Aorta (tissue), 5 donors: ENCODE measurements at regions of chr7 and their contacts with region 1.

Region 1: GRCh38 chr7:159015454-159016410 is 128.9 kb downstream of the VIPR2 start:
- DNase-seq: peak; percentile 80 to 90
- ATAC-seq: peak; percentile 85
- H3K4me3 ChIP-seq: no peak overlapping the region
- H3K27ac ChIP-seq: peak overlapping the region; percentile 64 to 97
- H3K4me1 ChIP-seq: peaks cover 4 to 5% of the 10 kb centered on the region in 2 donors
- H3K27me3 ChIP-seq: no peaks in the 10 kb centered on the region

Region 2: GRCh38 chr7:158620839-158621441 is 394.8 kb before region 1 on chr7:
- intact Hi-C with region 1: no loop called
- DNase-seq: no peak
- ATAC-seq: no peak
- H3K4me3 ChIP-seq: no peak overlapping the region
- H3K27ac ChIP-seq: no peak overlapping the region
- H3K4me1 ChIP-seq: peaks cover 0 to 1% of the 10 kb centered on the region in 2 donors
- H3K27me3 ChIP-seq: no peaks in the 10 kb centered on the region

Region 3: DNA sequence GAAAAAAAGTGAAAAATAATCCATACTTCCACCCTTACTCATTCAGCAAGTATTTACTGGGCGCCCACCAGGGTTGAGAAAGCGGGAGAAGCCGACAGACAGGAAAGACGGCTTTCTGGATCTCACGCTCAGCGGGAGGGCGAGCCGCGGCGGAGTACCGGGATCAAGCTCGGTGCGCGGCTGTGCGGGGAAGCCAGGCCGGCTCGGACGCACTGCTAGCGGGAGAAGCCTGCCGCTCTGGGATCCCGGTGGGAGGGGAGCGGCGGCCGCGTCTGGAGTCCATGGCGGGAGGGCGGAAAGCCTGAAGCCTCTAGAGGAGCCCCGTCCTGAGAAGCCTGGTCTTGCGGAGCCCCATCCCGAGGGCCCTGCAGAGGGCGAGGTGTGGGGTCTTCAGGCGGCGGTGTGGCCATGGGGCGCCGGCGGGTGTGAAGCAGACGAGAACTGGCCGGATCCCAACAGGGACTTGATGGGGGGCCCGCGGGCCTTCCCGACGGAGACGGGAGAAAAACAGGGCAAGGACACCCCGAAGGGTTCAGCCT is 46.0 kb after region 1 on chr7:
- intact Hi-C with region 1: no loop called
- DNase-seq: peak in 1 of 2 donors; percentile 80
- ATAC-seq: no peak
- H3K4me3 ChIP-seq: no peak overlapping the region
- H3K27ac ChIP-seq: no peak overlapping the region
- H3K4me1 ChIP-seq: no peaks in the 10 kb centered on the region
- H3K27me3 ChIP-seq: no peaks in the 10 kb centered on the region

Region 4: GRCh38 chr7:159091480-159092475 is 76.0 kb after region 1 on chr7:
- intact Hi-C with region 1: loop called in 1 of 2 experiments (anchors 2 kb)
- DNase-seq: peak in 1 of 2 donors; percentile 64
- ATAC-seq: peak; percentile 1
- H3K4me3 ChIP-seq: no peak overlapping the region
- H3K27ac ChIP-seq: peak overlapping the region; percentile 62 to 89
- H3K4me1 ChIP-seq: no peaks in the 10 kb centered on the region
- H3K27me3 ChIP-seq: no peaks in the 10 kb centered on the region

Region 5: DNA sequence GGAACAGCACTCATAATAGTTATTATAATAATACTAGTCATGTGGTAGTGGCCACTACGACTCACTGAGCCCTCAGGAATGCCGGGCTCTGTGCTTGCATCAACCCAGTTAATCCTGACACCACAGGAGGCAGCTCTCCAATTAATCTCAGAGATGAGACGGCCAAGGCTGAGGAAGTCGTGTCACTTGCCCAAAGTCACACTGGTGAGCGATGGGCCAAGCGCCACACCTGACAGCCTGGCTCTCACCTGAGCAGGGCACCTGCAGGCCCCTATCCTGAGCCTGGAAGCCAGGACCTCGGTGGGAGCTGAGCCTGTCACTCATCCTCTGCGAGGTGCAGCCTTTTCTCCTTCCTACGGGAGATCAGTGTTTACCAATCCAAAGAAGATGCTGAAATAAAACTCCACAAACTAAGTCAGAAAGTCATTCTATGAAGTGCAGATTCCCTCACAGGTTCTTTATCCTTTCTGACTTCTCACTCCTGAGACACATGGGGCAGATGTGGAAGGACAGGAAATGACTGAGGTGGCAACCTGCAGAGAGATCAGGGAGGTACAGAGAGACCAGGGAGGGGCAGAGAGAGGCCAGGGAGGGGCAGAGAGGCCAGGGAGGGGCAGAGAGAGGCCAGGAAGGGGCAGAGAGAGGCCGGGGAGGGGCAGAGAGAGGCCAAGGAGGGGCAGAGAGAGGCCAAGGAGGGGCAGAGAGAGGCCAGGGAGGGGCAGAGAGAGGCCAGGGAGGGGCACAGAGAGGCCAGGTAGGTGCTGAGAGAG is 90.3 kb after region 1 on chr7:
- intact Hi-C with region 1: loop called in 1 of 2 experiments (anchors 5 kb)
- DNase-seq: peak; percentile 40 to 60
- ATAC-seq: no peak
- H3K4me3 ChIP-seq: no peak overlapping the region
- H3K27ac ChIP-seq: peak overlapping the region in 1 of 2 donors; percentile 10
- H3K4me1 ChIP-seq: no peaks in the 10 kb centered on the region
- H3K27me3 ChIP-seq: no peaks in the 10 kb centered on the region